Esophagus muscularis mucosa (tissue), 4 donors: ENCODE measurements at regions of chr20 and their contacts with region 1.

Region 1: DNA sequence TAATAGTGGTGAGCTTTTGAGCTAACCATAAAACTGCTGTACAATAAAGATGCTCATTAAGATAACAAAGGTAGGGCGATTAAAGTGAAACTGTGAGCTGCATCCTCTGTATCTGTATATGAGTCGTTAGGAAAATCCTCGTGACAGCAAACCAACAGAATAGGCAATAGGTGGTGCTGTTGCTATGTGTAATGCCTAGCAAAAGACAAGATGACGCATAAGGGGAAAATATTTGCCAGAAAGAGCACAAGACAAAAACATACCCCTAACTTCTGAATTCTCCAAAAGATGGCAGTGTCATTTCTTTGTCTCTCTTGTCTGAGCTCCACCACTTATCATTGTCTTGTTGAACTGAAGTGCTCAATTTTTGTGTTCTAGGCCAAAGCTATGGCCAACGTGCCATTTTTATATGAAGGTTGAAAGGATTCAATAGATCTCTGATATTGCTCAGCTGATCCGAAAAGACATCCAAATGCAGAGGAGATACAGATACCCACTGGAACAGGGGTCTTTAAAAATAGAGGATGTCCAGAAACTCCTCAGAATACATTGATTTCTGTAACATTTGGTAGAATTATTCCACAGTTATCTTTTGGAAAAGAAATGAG is 56.3 kb upstream of the ANKEF1 start:
- DNase-seq: no peak
- H3K4me3 ChIP-seq: no peak overlapping the region
- H3K27ac ChIP-seq: no peak overlapping the region
- H3K4me1 ChIP-seq: peaks cover 0 to 6% (median 0%) of the 10 kb centered on the region in 4 donors
- H3K27me3 ChIP-seq: no peaks in the 10 kb centered on the region
- CTCF ChIP-seq: peak; percentile 60 to 71 (median 68)
- EP300 ChIP-seq: no peak
- POLR2A ChIP-seq: no peak

Region 2: GRCh38 chr20:10090588-10091166 is 112.2 kb after region 1 on chr20:
- intact Hi-C with region 1: loop called (anchors 5 kb)
- DNase-seq: no peak
- H3K4me3 ChIP-seq: no peak overlapping the region
- H3K27ac ChIP-seq: no peak overlapping the region
- H3K4me1 ChIP-seq: no peaks in the 10 kb centered on the region
- H3K27me3 ChIP-seq: no peaks in the 10 kb centered on the region
- CTCF ChIP-seq: peak; percentile 49 to 72 (median 57)
- EP300 ChIP-seq: no peak
- POLR2A ChIP-seq: no peak

Region 3: GRCh38 chr20:10125757-10126156 is 147.3 kb after region 1 on chr20:
- intact Hi-C with region 1: no loop called
- DNase-seq: no peak
- H3K4me3 ChIP-seq: no peak overlapping the region
- H3K27ac ChIP-seq: no peak overlapping the region
- H3K4me1 ChIP-seq: no peaks in the 10 kb centered on the region
- H3K27me3 ChIP-seq: no peaks in the 10 kb centered on the region
- CTCF ChIP-seq: no peak
- EP300 ChIP-seq: no peak
- POLR2A ChIP-seq: no peak

Region 4: GRCh38 chr20:10427060-10427692 is 448.7 kb after region 1 on chr20:
- intact Hi-C with region 1: loop called (anchors 5 kb)
- DNase-seq: no peak
- H3K4me3 ChIP-seq: no peak overlapping the region
- H3K27ac ChIP-seq: no peak overlapping the region
- H3K4me1 ChIP-seq: peaks cover 21 to 54% (median 47%) of the 10 kb centered on the region in 4 donors
- H3K27me3 ChIP-seq: no peaks in the 10 kb centered on the region
- CTCF ChIP-seq: peak; percentile 59 to 83 (median 62)
- EP300 ChIP-seq: no peak
- POLR2A ChIP-seq: no peak

Region 5: GRCh38 chr20:11544029-11544678 is 1565.7 kb after region 1 on chr20:
- intact Hi-C with region 1: loop called (anchors 5 kb)
- DNase-seq: no peak
- H3K4me3 ChIP-seq: no peak overlapping the region
- H3K27ac ChIP-seq: no peak overlapping the region
- H3K4me1 ChIP-seq: peaks cover 0 to 3% (median 0%) of the 10 kb centered on the region in 4 donors
- H3K27me3 ChIP-seq: peaks cover 0 to 8% (median 0%) of the 10 kb centered on the region in 4 donors
- CTCF ChIP-seq: peak; percentile 41 to 46 (median 45)
- EP300 ChIP-seq: no peak
- POLR2A ChIP-seq: no peak